IMR-90 (cell line): ENCODE measurements at regions of chr2 and their contacts with region 1.

Region 1: GRCh38 chr2:226407135-226407534 is 392.5 kb downstream of the IRS1 start:
- DNase-seq: no peak
- ATAC-seq: 0 out of 2 replicates have a peak, but pooled peaks have one; percentile 37
- H3K4me3 ChIP-seq: no peak overlapping the region
- H3K27ac ChIP-seq: no peak overlapping the region
- H3K4me1 ChIP-seq: no peaks in the 10 kb centered on the region; the same call in 1 of the 2 replicates
- H3K27me3 ChIP-seq: no peaks in the 10 kb centered on the region
- CTCF ChIP-seq: no peak
- POLR2A ChIP-seq: no peak
- RAD21 ChIP-seq: no peak

Region 2: DNA sequence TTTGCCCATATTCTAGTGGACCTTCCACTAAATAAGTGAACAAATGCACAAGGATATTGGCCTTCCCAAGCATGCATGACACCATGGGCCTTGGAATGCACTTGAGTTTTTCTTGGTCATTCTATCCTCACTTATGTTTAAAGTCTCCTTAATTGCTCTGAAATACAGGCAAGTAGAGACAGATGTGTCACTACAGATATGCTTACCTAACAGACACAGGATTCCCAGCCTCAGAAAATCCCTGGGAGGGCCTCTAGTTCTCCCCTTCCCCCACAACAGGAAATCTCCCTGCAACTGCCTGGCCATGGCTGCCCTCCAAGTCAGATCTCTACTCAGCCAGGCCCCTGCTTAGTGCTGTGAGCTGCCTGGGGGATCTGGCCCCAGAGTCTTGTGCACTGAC is 52.7 kb before region 1 on chr2:
- CTCF ChIA-PET with region 1: no interaction called
- POLR2A ChIA-PET with region 1: no interaction called
- dilution Hi-C with region 1: no loop called
- in situ Hi-C with region 1: no loop called
- intact Hi-C with region 1: loop called (anchors 5 kb)
- DNase-seq: peak; percentile 74
- ATAC-seq: peak; percentile 93
- H3K4me3 ChIP-seq: no peak overlapping the region
- H3K27ac ChIP-seq: peak overlapping the region; percentile 2; the same call in 1 of the 2 replicates
- H3K4me1 ChIP-seq: peaks cover 3% of the 10 kb centered on the region
- H3K27me3 ChIP-seq: no peaks in the 10 kb centered on the region
- CTCF ChIP-seq: no peak
- POLR2A ChIP-seq: no peak
- RAD21 ChIP-seq: no peak